Mammary epithelial cell (primary cell): ENCODE measurements at regions of chr3 and their contacts with region 1.

Region 1: DNA sequence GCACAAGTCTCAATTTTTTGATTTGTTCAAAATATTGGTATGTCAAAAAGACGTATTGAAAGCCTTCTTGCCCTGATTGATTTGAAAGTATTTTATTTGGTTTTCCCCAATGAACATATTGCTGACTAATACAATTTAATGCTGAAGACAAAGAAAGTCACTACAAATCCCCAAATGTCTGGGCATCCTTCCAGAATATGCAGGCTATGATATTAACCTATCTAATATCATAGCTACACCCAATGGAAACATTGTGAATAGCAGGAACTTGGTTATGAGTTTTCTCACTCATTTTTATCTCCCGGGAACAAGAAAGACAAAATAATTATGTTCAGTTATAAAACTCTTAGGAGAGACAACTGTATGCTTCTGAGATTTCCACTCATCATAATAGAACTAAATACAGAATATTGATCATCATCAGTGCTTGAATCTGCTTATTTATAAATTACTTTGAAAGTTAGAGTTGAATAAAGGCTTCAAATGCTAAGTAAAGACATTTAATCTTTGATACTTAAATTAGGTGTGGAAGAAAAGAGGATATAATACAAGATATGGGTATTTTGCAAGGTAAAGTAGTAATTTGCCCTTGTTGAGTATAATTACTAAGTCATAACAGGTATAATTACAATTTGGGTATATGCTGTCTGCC is 483.9 kb downstream of the RBMS3 start:
- DNase-seq: peak; percentile 70
- H3K4me3 ChIP-seq: no peak overlapping the region
- H3K27ac ChIP-seq: no peak overlapping the region
- H3K4me1 ChIP-seq: peaks cover 7% of the 10 kb centered on the region
- H3K27me3 ChIP-seq: no peaks in the 10 kb centered on the region
- CTCF ChIP-seq: peak; percentile 87 to 90

Region 2: DNA sequence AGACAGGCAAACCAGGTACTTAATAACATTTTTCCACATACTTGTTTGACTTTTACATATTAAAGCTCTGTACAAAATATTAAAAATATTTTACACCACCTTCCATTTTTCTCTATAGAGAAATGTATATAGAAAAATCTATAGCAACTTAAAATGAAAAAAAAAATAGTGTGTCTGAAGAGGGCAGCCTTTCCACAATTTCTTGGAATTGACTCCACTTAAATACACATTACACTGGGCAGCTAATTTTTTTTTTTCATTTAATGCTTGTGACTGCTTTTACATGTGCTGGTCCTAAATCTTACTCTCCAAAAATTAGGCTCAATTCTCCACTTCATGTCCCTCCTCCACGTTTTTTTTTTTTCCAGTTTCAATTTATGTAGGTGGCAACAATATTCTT is 910.9 kb before region 1 on chr3:
- CTCF ChIA-PET with region 1: no interaction called
- dilution Hi-C with region 1: no loop called
- in situ Hi-C with region 1: no loop called
- intact Hi-C with region 1: loop called (anchors 5 kb)
- DNase-seq: no peak
- H3K4me3 ChIP-seq: no peak overlapping the region
- H3K27ac ChIP-seq: no peak overlapping the region
- H3K4me1 ChIP-seq: peaks cover 4% of the 10 kb centered on the region
- H3K27me3 ChIP-seq: no peaks in the 10 kb centered on the region
- CTCF ChIP-seq: peak in 1 of 2 donors; percentile 23

Region 3: GRCh38 chr3:29065211-29065785 is 699.4 kb before region 1 on chr3:
- CTCF ChIA-PET with region 1: no interaction called
- dilution Hi-C with region 1: no loop called
- in situ Hi-C with region 1: no loop called
- intact Hi-C with region 1: loop called (anchors 5 kb)
- DNase-seq: peak; percentile 99
- H3K4me3 ChIP-seq: no peak overlapping the region
- H3K27ac ChIP-seq: peak overlapping the region; percentile 78
- H3K4me1 ChIP-seq: peaks cover 11% of the 10 kb centered on the region
- H3K27me3 ChIP-seq: no peaks in the 10 kb centered on the region
- CTCF ChIP-seq: no peak

Region 4: DNA sequence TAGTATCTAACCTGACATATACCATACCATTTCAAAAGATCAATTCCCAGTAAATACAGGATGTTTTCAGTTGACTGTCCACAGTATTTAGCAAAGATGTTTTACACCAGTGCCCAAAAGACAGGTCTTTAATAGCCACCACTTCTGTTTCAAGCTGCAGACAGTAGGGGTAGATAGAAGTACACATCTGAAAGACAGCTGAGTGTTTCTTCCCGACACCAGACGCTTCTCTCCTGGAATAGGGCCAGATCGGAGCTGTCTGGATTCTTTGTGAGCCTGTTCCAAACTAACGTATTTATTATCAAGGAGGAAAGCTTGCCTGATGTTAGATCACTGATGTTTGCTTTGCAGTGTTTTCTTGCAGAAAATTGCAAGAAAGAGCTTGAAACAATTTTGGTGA is 619.9 kb before region 1 on chr3:
- CTCF ChIA-PET with region 1: interaction called, 4 read pairs
- dilution Hi-C with region 1: no loop called
- in situ Hi-C with region 1: no loop called
- intact Hi-C with region 1: loop called (anchors 2 kb)
- DNase-seq: no peak
- H3K4me3 ChIP-seq: no peak overlapping the region
- H3K27ac ChIP-seq: no peak overlapping the region
- H3K4me1 ChIP-seq: no peaks in the 10 kb centered on the region
- H3K27me3 ChIP-seq: no peaks in the 10 kb centered on the region
- CTCF ChIP-seq: peak in 1 of 2 donors; percentile 8

Region 5: DNA sequence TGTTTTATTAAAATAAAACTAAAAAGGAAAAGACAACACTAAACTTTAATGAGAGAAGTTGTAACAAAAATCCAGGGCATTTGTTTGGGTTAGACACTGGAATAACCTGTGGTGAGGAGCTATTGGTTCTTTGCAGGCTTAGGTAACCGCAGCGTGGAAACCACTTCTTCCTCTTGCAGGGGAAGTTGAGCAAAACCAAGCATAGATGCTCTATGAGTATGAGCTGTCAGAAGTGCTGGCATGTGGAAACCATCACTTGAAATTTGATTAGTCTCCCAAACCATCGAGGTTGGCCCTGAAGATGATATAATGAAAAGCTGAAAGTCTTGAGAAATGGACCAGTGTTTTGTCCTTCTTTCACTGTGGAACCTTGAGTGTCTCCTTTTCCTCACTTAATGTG is 610.9 kb before region 1 on chr3:
- CTCF ChIA-PET with region 1: no interaction called
- dilution Hi-C with region 1: no loop called
- in situ Hi-C with region 1: no loop called
- intact Hi-C with region 1: loop called (anchors 2 kb)
- DNase-seq: no peak
- H3K4me3 ChIP-seq: no peak overlapping the region
- H3K27ac ChIP-seq: no peak overlapping the region
- H3K4me1 ChIP-seq: no peaks in the 10 kb centered on the region
- H3K27me3 ChIP-seq: no peaks in the 10 kb centered on the region
- CTCF ChIP-seq: no peak

Region 6: GRCh38 chr3:29453284-29454001 is 311.3 kb before region 1 on chr3:
- CTCF ChIA-PET with region 1: no interaction called
- dilution Hi-C with region 1: no loop called
- in situ Hi-C with region 1: loop called in 1 of 2 experiments (anchors 25 kb)
- intact Hi-C with region 1: no loop called
- DNase-seq: peak; percentile 26
- H3K4me3 ChIP-seq: no peak overlapping the region
- H3K27ac ChIP-seq: peak overlapping the region; percentile 91
- H3K4me1 ChIP-seq: peaks cover 36% of the 10 kb centered on the region
- H3K27me3 ChIP-seq: no peaks in the 10 kb centered on the region
- CTCF ChIP-seq: no peak